ENCODE measurements at regions of chr17 and their contacts with region 1.

Region 1: DNA sequence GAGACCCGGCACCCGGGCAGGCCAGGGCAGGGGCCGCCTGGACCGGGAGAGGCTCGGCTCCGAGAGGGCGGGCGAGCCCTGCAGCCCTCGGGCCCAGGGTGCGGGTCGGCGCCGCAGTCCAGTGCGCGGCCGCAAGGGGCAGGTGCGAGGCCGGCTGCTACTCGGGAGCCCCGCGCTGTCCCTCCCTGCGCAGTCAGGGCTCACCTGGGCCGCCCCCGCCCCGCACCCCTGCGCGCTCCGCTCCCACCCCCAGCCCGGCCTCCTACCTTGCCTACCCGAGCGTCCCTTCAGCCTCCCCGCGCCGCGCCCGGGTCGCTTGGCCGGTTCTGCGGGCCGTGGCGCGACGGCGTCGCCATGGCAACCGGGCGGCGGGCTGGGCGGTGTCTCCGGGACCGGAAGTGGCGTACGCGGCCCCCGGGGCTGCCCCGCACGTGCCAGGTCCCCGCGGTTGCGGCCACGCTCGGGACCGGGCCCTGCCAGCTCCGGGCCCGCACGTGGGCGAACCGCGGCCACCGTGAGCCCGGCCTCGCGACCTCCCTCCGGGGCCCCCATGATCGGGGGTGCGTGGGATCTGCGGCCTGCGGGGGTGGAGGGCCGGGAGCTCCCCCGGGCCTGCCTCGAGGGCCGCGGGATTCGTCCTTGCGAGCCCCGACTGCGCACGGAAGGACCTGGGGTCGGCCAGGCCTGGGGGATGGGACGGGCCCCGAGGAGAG is at the start of gene CYB561:
- H3K4me3 Mint-ChIP-seq: peak within 1 kb of the TSS; percentile 75
- H3K27ac Mint-ChIP-seq: peak within 1 kb of the TSS; percentile 85
- H3K4me1 Mint-ChIP-seq: peaks cover 60% of the 10 kb centered on the region
- H3K27me3 Mint-ChIP-seq: peaks cover 22% of the 10 kb centered on the region

Region 2: GRCh38 chr17:63459952-63460393 is 13.8 kb after region 1 on chr17:
- intact Hi-C with region 1: loop called (anchors 2 kb)
- H3K4me3 Mint-ChIP-seq: no peak overlapping the region
- H3K27ac Mint-ChIP-seq: peak overlapping the region; percentile 80
- H3K4me1 Mint-ChIP-seq: peaks cover 48% of the 10 kb centered on the region
- H3K27me3 Mint-ChIP-seq: peaks cover 11% of the 10 kb centered on the region

Region 3: GRCh38 chr17:63478791-63479494 is 32.8 kb after region 1 on chr17:
- intact Hi-C with region 1: loop called (anchors 2 kb)
- H3K4me3 Mint-ChIP-seq: peak overlapping the region; percentile 97
- H3K27ac Mint-ChIP-seq: peak overlapping the region; percentile 78
- H3K4me1 Mint-ChIP-seq: peaks cover 80% of the 10 kb centered on the region
- H3K27me3 Mint-ChIP-seq: peaks cover 18% of the 10 kb centered on the region

Region 4: DNA sequence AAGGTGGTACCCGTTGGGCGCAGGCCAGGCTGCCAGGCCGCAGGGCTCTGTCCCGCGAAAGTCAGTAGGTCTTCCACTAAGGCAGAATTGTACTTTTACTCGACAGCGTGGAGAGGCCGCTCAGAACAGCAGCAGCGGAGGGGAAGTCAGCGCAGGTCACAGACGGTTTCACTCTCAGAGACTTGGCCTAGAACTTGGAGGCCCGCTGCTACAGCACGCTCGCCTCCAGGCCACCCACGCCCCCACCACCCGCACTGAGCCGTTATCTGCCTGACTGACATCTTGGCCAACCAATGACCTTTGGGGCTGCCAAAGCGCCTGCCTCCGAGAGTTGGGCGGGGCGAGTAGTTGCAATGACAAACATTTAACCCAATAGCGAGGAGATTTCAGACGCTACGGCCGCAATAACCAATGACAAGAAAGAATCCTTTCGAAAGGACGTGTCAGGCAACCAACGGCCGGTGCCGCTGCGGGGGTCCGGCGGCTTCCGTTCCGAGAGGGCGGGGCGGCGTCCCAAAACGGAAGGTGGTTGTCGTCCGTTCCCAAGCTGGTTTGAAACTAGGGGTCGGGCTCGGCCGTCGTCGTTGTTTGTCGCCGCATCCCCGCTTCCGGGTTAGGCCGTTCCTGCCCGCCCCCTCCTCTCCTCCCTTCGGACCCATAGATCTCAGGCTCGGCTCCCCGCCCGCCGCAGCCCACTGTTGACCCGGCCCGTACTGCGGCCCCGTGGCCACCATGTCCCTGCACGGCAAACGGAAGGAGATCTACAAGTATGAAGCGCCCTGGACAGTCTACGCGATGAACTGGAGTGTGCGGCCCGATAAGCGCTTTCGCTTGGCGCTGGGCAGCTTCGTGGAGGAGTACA is 104.0 kb after region 1 on chr17 and contains the start of gene DCAF7:
- intact Hi-C with region 1: loop called (anchors 1 kb)
- H3K4me3 Mint-ChIP-seq: peak within 1 kb of the TSS; percentile 98
- H3K27ac Mint-ChIP-seq: peak within 1 kb of the TSS; percentile 97
- H3K4me1 Mint-ChIP-seq: peaks cover 44% of the 10 kb centered on the region
- H3K27me3 Mint-ChIP-seq: no peaks in the 10 kb centered on the region

Measured in dendritic cell treated with granulocyte-macrophage colony-stimulating factor and Interleukin-4, amounts not matched to agents 40 ng/mL and 50 ng/mL, for 4 days (primary cell).